ENCODE measurements at regions of chr1 and their contacts with region 1.

Region 1: DNA sequence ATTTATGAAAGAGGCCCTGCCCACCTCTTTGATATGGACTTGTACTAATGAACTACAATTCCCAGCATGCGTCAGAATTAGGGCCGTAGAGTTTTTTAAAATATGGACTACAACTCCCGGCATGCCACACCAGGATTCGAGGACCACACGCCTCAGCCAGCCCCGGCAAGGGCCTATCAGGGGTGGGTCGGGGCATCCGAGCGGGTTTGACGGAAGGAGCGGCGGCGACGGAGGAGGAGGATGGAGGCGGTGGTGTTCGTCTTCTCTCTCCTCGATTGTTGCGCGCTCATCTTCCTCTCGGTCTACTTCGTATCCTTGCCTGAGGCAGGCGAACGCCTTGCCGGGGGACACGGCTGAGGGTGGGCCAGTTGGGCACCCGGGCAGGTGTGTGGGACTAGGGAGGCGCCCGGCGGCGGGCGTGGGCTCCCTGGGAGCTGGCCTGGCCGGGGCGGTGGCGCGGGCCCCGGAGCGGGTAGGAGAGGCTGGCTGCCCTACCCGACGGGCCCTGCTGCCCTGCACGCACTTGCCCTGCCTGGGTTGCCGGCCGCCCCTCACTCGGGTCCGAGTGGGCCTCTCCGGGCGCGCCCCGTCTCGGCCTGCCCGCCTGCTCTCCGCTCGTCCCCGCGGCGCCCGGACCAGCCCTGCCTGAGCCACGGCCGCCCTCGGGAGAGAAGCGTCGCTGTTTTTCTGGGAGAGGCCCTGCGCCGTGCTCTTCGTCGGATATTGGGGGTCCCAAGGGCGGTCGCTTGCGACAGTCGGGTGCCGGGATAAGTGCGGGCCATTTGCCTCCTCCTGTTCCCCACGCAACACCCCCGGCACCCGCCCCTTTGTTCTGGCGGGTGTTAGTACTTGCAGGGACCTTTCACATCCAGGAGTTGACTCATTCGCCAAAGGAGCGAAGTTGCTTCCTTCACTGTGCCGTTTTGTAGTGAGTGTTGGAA is at the start of gene CNIH4:
- DNase-seq: peak; percentile 96
- ATAC-seq: peak; percentile 99
- H3K4me3 Mint-ChIP-seq: peak within 1 kb of the TSS; percentile 79
- H3K27ac Mint-ChIP-seq: peak within 1 kb of the TSS; percentile 84
- H3K4me1 Mint-ChIP-seq: peaks cover 53% of the 10 kb centered on the region
- H3K27me3 Mint-ChIP-seq: no peaks in the 10 kb centered on the region
- total RNA-seq, gene CNIH4: 41.3 to 43.7 TPM

Region 2: DNA sequence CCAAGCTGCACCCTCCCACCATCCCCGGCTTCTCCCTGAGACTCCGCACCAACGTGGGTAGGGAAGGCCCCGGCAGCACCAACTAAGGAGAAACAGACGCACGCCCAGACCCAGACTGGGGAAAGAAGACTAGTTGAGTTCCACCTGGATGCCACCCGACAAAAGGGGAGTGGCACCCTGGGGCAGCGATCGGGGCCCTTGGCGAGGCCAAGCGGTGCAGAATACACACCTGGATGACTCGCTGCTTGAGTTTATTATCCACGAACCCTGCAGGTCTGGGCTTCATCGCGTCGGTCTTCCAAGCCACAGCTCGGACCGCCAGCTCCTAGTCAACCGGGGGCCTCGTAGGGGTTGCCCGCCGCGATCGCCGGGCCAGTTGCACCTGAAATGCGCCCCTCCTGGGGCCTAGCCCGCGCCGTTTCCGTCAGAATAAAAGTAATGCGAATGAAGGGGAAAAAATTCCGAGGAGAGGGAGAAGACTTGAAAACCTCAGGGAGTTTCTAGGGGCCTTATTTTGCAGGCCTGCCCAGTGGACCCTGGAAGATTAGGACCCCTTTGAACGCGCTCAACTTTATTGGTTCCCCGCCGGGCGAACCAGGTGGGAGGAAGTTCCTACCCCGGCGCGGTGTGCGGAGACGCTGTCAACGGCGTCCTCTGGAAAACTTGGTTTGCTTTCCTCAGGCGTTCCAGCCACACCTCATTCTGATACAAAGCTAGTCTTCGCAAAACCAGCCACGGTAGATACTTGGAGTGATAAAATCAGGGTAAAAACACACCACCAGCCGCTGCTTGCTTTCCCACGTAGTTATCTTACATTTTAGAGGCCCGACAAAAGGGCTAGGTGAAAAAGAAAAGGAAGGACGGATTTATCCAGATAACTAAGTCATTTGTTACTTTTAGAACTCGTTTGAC is 26.9 kb before region 1 on chr1 and contains the start of gene NVL:
- CTCF ChIA-PET with region 1: interaction called, 17 read pairs
- POLR2A ChIA-PET with region 1: no interaction called
- DNase-seq: peak; percentile 86
- ATAC-seq: peak; percentile 88
- H3K4me3 Mint-ChIP-seq: peak within 1 kb of the TSS; percentile 93
- H3K27ac Mint-ChIP-seq: peak within 1 kb of the TSS; percentile 100
- H3K4me1 Mint-ChIP-seq: peaks cover 54% of the 10 kb centered on the region
- H3K27me3 Mint-ChIP-seq: no peaks in the 10 kb centered on the region
- total RNA-seq, gene NVL: 48.5 to 56.2 TPM

Region 3: GRCh38 chr1:224368409-224368808 is 11.5 kb after region 1 on chr1:
- CTCF ChIA-PET with region 1: interaction called, 15 read pairs
- POLR2A ChIA-PET with region 1: interaction called, 6 read pairs
- DNase-seq: no peak
- ATAC-seq: no peak
- H3K4me3 Mint-ChIP-seq: no peak overlapping the region
- H3K27ac Mint-ChIP-seq: no peak overlapping the region
- H3K4me1 Mint-ChIP-seq: peaks cover 27% of the 10 kb centered on the region
- H3K27me3 Mint-ChIP-seq: no peaks in the 10 kb centered on the region

Region 4: GRCh38 chr1:224377676-224378006 is 20.7 kb after region 1 on chr1:
- CTCF ChIA-PET with region 1: interaction called, 15 read pairs
- POLR2A ChIA-PET with region 1: interaction called, 7 read pairs
- DNase-seq: peak; percentile 50
- ATAC-seq: peak; percentile 47
- H3K4me3 Mint-ChIP-seq: peak overlapping the region; percentile 40
- H3K27ac Mint-ChIP-seq: peak overlapping the region; percentile 88
- H3K4me1 Mint-ChIP-seq: peaks cover 91% of the 10 kb centered on the region
- H3K27me3 Mint-ChIP-seq: no peaks in the 10 kb centered on the region

Region 5: GRCh38 chr1:224503161-224504118 is 146.5 kb after region 1 on chr1:
- CTCF ChIA-PET with region 1: no interaction called
- POLR2A ChIA-PET with region 1: no interaction called
- DNase-seq: peak; percentile 39
- ATAC-seq: no peak
- H3K4me3 Mint-ChIP-seq: no peak overlapping the region
- H3K27ac Mint-ChIP-seq: peak overlapping the region; percentile 80
- H3K4me1 Mint-ChIP-seq: peaks cover 56% of the 10 kb centered on the region
- H3K27me3 Mint-ChIP-seq: no peaks in the 10 kb centered on the region

Measured in activated CD8-positive, alpha-beta T cell treated with anti-CD3 and anti-CD28 coated beads, Interleukin-2, amount 10 ng/mL, durations not matched to agents 7 days and 5 days (primary cell).